Sigmoid colon (tissue), 7 donors: ENCODE measurements at regions of chr2 and their contacts with region 1.

Region 1: GRCh38 chr2:238263204-238264071 is 23.6 kb upstream of the HES6 start:
- DNase-seq: peak; percentile 96
- H3K4me3 ChIP-seq: no peak overlapping the region
- H3K27ac ChIP-seq: peak overlapping the region; percentile 50 to 66 (median 65)
- H3K4me1 ChIP-seq: peaks cover 0 to 33% (median 18%) of the 10 kb centered on the region in 4 donors
- H3K27me3 ChIP-seq: no peaks in the 10 kb centered on the region
- CTCF ChIP-seq: peak; percentile 68 to 92 (median 90)
- EP300 ChIP-seq: no peak
- POLR2A ChIP-seq: no peak

Region 2: DNA sequence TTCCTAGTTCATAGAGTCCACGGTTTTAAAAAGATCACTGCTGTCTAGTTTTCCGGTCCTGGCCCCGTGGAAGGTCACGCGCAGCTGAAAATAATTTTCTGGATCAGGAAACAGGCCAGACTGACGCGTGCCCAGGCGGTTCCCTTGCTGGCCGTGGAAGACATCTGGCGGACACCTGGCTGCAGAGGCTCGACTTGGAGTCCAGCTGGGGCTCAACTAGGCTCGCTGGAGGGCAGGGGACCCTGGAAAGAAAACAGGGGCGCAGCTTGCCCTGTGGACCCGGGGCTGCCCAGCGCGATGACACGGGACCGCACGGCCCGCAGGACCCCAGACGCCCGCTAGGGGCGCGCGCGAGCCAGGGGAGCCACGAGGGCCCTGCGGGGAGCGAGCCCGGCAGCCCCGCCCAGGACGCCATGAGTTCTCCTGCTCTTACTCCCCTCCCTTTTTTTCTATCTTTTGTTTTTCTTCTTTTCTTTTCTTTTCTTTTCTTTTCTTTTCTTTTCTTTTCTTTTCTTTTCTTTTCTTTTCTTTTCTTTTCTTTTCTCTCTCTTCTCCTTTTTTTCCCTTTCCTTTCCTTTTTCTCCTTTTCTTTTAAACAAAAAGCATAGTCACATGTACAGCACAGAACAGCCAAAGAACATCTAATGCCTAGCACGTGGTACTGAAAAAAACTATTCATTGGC is 339.8 kb before region 1 on chr2:
- intact Hi-C with region 1: loop called (anchors 5 kb)
- DNase-seq: peak; percentile 93
- H3K4me3 ChIP-seq: peak overlapping the region in 3 of 4 donors; percentile 26 to 32 (median 27)
- H3K27ac ChIP-seq: peak overlapping the region; percentile 56 to 78 (median 64)
- H3K4me1 ChIP-seq: peaks cover 0 to 19% (median 14%) of the 10 kb centered on the region in 4 donors
- H3K27me3 ChIP-seq: no peaks in the 10 kb centered on the region
- CTCF ChIP-seq: peak; percentile 70 to 96 (median 93)
- EP300 ChIP-seq: no peak
- POLR2A ChIP-seq: no peak

Region 3: GRCh38 chr2:238060542-238061314 is 202.7 kb before region 1 on chr2 and contains the start of gene SCLY:
- intact Hi-C with region 1: loop called (anchors 5 kb)
- DNase-seq: peak; percentile 99
- H3K4me3 ChIP-seq: peak within 1 kb of the TSS; percentile 72 to 91 (median 82)
- H3K27ac ChIP-seq: peak within 1 kb of the TSS; percentile 84 to 96 (median 94)
- H3K4me1 ChIP-seq: peaks cover 0 to 25% (median 16%) of the 10 kb centered on the region in 4 donors
- H3K27me3 ChIP-seq: no peaks in the 10 kb centered on the region
- CTCF ChIP-seq: no peak
- EP300 ChIP-seq: peak in 1 of 4 donors; percentile 39
- POLR2A ChIP-seq: peak; percentile 83 to 89
- total RNA-seq, gene SCLY: 10.3 to 14.4 (median 11.7) TPM

Region 4: DNA sequence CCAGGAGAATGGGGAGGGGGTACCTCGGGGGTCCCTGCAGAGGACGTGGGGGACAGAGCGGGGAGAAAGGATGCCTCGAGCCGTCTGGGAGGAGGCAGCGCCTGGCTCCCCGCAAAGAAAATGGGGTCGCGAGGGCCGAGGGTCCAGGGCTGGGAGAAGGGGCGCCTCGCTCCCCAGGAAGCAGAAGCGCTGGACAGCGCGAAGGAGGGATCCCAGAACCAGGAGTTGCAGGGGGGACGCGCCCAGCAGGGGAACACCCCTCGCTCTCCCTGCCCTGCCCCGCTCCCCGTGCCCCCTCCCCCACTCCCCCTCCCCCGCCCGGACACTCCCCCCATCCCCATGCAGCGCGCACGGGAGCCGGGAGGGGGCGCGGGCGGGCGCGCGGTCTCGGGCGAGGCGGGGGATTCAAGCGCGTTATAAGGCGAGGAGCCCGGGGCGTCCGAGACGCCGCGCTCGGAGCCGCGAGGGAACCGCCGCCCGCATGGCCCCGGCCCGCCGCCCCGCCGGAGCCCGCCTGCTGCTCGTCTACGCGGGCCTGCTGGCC is 104.8 kb before region 1 on chr2 and contains the start of gene ERFE:
- intact Hi-C with region 1: loop called (anchors 2 kb)
- DNase-seq: no peak
- H3K4me3 ChIP-seq: peak within 1 kb of the TSS in 3 of 4 donors; percentile 28 to 38 (median 36)
- H3K27ac ChIP-seq: no peak within 1 kb of the TSS
- H3K4me1 ChIP-seq: peaks cover 0 to 19% (median 16%) of the 10 kb centered on the region in 4 donors
- H3K27me3 ChIP-seq: peaks cover 11 to 38% (median 25%) of the 10 kb centered on the region in 3 donors
- CTCF ChIP-seq: peak in 1 of 4 experiments; percentile 57
- EP300 ChIP-seq: no peak
- POLR2A ChIP-seq: no peak
- total RNA-seq, gene ERFE: 0.49 to 0.71 TPM in 2 of 4 donors, not detected in the others

Region 5: GRCh38 chr2:238203094-238203972 is 60.1 kb before region 1 on chr2 and contains the start of gene ILKAP:
- intact Hi-C with region 1: loop called (anchors 10 kb)
- DNase-seq: peak; percentile 95
- H3K4me3 ChIP-seq: peak within 1 kb of the TSS; percentile 51 to 97 (median 82)
- H3K27ac ChIP-seq: peak within 1 kb of the TSS; percentile 90 to 99 (median 95)
- H3K4me1 ChIP-seq: peaks cover 0 to 46% (median 43%) of the 10 kb centered on the region in 4 donors
- H3K27me3 ChIP-seq: no peaks in the 10 kb centered on the region
- CTCF ChIP-seq: no peak
- EP300 ChIP-seq: no peak
- POLR2A ChIP-seq: peak; percentile 68 to 69
- total RNA-seq, gene ILKAP: 32.2 to 57.3 (median 45.3) TPM

Region 6: GRCh38 chr2:238438856-238439849 is 175.7 kb after region 1 on chr2:
- intact Hi-C with region 1: no loop called
- DNase-seq: no peak
- H3K4me3 ChIP-seq: no peak overlapping the region
- H3K27ac ChIP-seq: peak overlapping the region in 3 of 4 donors; percentile 24 to 34 (median 33)
- H3K4me1 ChIP-seq: peaks cover 0 to 29% (median 12%) of the 10 kb centered on the region in 4 donors
- H3K27me3 ChIP-seq: no peaks in the 10 kb centered on the region
- CTCF ChIP-seq: no peak
- EP300 ChIP-seq: no peak
- POLR2A ChIP-seq: no peak